ENCODE measurements at regions of chr9 and their contacts with region 1.

Region 1: GRCh38 chr9:105475302-105475701 is 27.5 kb downstream of the FSD1L start:
- DNase-seq: peak in 1 of 2 experiments; percentile 23
- H3K4me3 ChIP-seq: no peak overlapping the region
- H3K4me3 Mint-ChIP-seq: no peak overlapping the region
- H3K27ac Mint-ChIP-seq: no peak overlapping the region
- H3K4me1 ChIP-seq: no peaks in the 10 kb centered on the region
- H3K4me1 Mint-ChIP-seq: no peaks in the 10 kb centered on the region
- H3K27me3 ChIP-seq: no peaks in the 10 kb centered on the region
- H3K27me3 Mint-ChIP-seq: no peaks in the 10 kb centered on the region
- CTCF ChIP-seq: peak; percentile 34 to 67

Region 2: GRCh38 chr9:105447814-105448812 is 27.2 kb before region 1 on chr9 and contains the start of gene FSD1L:
- CTCF ChIA-PET with region 1: interaction called, 4 read pairs
- POLR2A ChIA-PET with region 1: no interaction called
- intact Hi-C with region 1: loop called (anchors 1 kb)
- DNase-seq: peak; percentile 93 to 94
- H3K4me3 ChIP-seq: peak within 1 kb of the TSS; percentile 68
- H3K4me3 Mint-ChIP-seq: peak within 1 kb of the TSS; percentile 92
- H3K27ac Mint-ChIP-seq: peak within 1 kb of the TSS; percentile 85
- H3K4me1 ChIP-seq: peaks cover 12% of the 10 kb centered on the region
- H3K4me1 Mint-ChIP-seq: peaks cover 5% of the 10 kb centered on the region
- H3K27me3 ChIP-seq: no peaks in the 10 kb centered on the region
- H3K27me3 Mint-ChIP-seq: no peaks in the 10 kb centered on the region
- CTCF ChIP-seq: peak in 1 of 2 experiments; percentile 13
- total RNA-seq, gene FSD1L: 4.7 and 5.7 TPM in 2 replicates

Region 3: DNA sequence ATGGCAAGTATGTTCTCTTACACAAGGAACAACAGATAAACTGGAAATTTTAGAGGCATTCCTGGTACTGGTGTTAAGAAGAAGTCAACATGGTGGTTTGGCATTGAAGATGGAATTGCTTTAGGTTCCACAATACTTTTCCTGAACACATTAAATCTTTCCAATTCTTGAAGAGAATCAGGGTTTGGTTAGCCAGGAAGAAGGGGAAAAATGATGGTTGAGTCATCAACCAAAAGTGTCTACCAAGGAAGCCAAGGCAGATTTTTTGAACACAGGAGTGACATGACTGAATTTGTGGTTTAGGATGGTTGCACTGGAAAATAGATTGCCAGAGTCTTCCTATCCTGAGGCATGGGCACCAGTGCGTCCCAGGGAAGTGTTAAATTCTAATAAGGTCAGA is 652.5 kb after region 1 on chr9:
- CTCF ChIA-PET with region 1: no interaction called
- POLR2A ChIA-PET with region 1: no interaction called
- intact Hi-C with region 1: no loop called
- DNase-seq: no peak
- H3K4me3 ChIP-seq: no peak overlapping the region
- H3K4me3 Mint-ChIP-seq: no peak overlapping the region
- H3K27ac Mint-ChIP-seq: no peak overlapping the region
- H3K4me1 ChIP-seq: no peaks in the 10 kb centered on the region
- H3K4me1 Mint-ChIP-seq: no peaks in the 10 kb centered on the region
- H3K27me3 ChIP-seq: no peaks in the 10 kb centered on the region
- H3K27me3 Mint-ChIP-seq: no peaks in the 10 kb centered on the region
- CTCF ChIP-seq: no peak